GM12878 (cell line): ENCODE measurements at regions of chr12 and their contacts with region 1.

Region 1: DNA sequence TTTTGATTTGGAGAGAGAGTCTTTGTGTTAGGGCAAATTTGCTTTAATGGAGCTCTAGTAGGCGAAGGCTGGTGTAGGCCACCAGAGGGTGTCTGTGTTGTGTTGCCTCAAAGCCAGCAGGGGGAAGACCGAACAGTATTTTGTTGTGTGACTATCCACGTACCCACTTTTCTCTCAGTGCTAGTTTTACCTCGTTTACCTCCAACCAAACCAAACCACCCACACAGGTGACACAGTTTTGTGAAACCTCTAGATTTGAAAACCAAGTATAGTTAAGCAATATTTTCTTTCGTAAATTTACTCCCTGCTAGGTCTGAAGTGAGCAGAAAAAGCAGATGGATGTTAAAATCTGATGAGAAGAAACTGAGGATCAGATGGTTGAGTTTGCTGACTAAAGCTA is 36.3 kb upstream of the NPFF start:
- DNase-seq: peak; percentile 53
- ATAC-seq: peak; percentile 99
- H3K4me3 ChIP-seq: no peak overlapping the region
- H3K27ac ChIP-seq: peak overlapping the region; percentile 34; the same call in 1 of the 2 replicates
- H3K4me1 ChIP-seq: peaks cover 4% of the 10 kb centered on the region; the same call in 1 of the 2 replicates
- H3K27me3 ChIP-seq: no peaks in the 10 kb centered on the region
- CTCF ChIP-seq: peak; percentile 85 to 99 (median 88); a peak in 5 of 6 replicates
- EP300 ChIP-seq: no peak
- POLR2A ChIP-seq: no peak
- RAD21 ChIP-seq: peak; percentile 90

Region 2: DNA sequence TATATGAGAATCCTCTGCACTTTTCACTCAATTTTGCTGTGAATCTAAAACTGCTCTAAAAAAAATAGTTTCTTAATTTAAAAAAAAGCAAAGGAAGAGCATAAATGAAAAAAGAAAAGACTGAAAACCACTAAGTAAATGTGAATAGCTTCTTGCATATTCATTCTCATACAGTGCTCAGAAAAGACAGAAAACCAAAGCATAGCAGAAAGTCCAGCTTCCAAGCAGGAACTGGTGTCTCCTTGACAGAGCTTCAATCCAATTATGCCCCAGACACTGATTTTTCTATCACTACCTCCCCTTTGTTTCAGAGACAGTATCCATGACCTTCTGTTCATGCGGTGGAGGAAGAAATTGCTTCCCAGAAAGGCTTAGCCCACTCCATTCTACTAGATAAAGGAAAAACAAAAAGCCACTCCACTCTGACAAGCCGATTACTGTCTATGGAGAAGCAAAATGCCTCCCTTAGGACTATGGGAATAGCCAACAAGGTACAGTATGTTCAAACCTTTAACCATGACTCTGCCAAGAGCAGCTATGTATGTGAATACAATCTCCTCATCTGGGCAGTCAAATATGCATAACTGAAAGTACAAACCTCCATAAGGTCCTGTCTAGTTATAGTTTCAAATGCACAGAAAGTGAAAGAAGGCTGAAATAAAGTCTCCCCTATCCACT is 42.0 kb after region 1 on chr12:
- CTCF ChIA-PET with region 1: interaction called, 30 read pairs
- POLR2A ChIA-PET with region 1: no interaction called
- RAD21 ChIA-PET with region 1: interaction called, 9 read pairs
- SMC1A ChIA-PET with region 1: interaction called, 14 read pairs
- in situ Hi-C with region 1: no loop called
- intact Hi-C with region 1: no loop called
- DNase-seq: no peak
- ATAC-seq: peak; percentile 96
- H3K4me3 ChIP-seq: peak overlapping the region; percentile 40; the same call in 1 of the 2 replicates
- H3K27ac ChIP-seq: peak overlapping the region; percentile 54; the same call in 1 of the 2 replicates
- H3K4me1 ChIP-seq: peaks cover 13% of the 10 kb centered on the region
- H3K27me3 ChIP-seq: no peaks in the 10 kb centered on the region
- CTCF ChIP-seq: no peak
- EP300 ChIP-seq: no peak
- POLR2A ChIP-seq: no peak
- RAD21 ChIP-seq: no peak

Region 3: DNA sequence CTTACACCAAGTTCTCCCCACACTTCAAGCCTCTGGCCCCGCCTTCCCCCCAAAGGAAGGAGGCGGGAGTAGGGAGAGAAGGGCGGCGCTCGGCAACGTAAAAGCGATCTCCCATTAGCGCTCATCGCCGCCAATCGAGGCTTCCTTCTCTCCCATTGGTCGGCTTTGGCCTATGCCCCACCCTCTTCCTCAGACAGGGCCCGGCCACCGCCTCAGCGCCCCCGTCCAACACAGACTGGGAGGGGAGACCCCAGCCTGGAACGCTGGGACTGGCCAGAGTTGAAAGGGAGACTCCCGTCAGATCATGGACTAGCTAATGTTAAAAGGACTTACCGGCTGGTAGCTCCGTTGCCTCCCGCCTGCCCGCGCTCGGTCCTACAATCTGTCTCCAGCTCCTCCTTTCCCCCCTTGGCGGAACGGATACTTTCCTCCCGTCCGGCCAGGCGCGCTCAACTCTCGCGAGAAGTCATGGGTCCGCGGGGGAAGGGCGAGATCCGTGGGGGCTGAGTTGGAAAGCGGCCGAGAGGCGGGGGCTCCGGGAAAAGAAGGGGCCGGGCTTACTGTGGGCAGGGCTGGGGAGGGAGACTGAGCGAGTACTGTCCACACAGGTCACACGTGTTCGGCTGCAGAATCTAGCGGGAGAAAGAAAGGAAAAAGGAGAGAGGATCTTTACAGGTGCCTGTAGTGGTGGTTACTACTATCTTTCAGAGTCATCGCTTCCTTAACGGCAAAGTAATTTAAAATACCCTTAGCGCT is 82.6 kb after region 1 on chr12 and contains the start of gene ATF7:
- CTCF ChIA-PET with region 1: interaction called, 26 read pairs
- POLR2A ChIA-PET with region 1: interaction called, 5 read pairs
- RAD21 ChIA-PET with region 1: interaction called, 39 read pairs
- SMC1A ChIA-PET with region 1: interaction called, 29 read pairs
- in situ Hi-C with region 1: no loop called
- intact Hi-C with region 1: loop called (anchors 2 kb)
- DNase-seq: peak; percentile 96
- ATAC-seq: peak; percentile 98
- H3K4me3 ChIP-seq: peak within 1 kb of the TSS; percentile 94
- H3K27ac ChIP-seq: peak within 1 kb of the TSS; percentile 96
- H3K4me1 ChIP-seq: no peaks in the 10 kb centered on the region
- H3K27me3 ChIP-seq: no peaks in the 10 kb centered on the region
- CTCF ChIP-seq: no peak
- EP300 ChIP-seq: 0 out of 4 replicates have a peak, but pooled peaks of 1 of the 2 experiments have one; percentile 23
- POLR2A ChIP-seq: peak; percentile 80
- RAD21 ChIP-seq: no peak
- polyA plus RNA-seq, gene ATF7: 21.8 to 26.8 TPM

Region 4: DNA sequence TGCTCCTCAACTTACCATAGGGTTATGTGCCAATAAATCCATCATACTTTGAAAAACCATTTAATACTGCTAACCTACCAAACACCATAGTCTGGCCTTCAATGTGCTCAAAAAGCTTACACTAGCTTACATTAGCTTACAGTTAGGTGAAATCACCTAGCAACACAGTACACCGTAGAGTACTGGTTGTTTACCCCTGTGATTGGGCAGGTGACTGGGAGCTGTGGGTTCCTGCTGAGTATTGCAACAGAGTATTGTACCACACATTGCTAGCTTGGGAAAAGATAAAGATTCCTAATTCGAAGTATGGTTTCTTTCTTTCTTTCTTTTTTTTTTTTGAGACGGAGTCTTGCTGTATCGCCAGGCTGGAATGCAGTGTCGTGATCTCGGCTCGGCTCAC is 126.8 kb after region 1 on chr12:
- CTCF ChIA-PET with region 1: interaction called, 189 read pairs
- POLR2A ChIA-PET with region 1: interaction called, 35 read pairs
- RAD21 ChIA-PET with region 1: interaction called, 140 read pairs
- SMC1A ChIA-PET with region 1: interaction called, 112 read pairs
- in situ Hi-C with region 1: loop called (anchors 5 kb)
- intact Hi-C with region 1: no loop called
- DNase-seq: no peak
- ATAC-seq: peak; percentile 32; the same call in 1 of the 3 replicates
- H3K4me3 ChIP-seq: no peak overlapping the region
- H3K27ac ChIP-seq: no peak overlapping the region
- H3K4me1 ChIP-seq: no peaks in the 10 kb centered on the region
- H3K27me3 ChIP-seq: no peaks in the 10 kb centered on the region
- CTCF ChIP-seq: no peak
- EP300 ChIP-seq: no peak
- POLR2A ChIP-seq: no peak
- RAD21 ChIP-seq: no peak

Region 5: GRCh38 chr12:53746592-53747092 is 203.1 kb after region 1 on chr12:
- CTCF ChIA-PET with region 1: interaction called, 81 read pairs
- POLR2A ChIA-PET with region 1: interaction called, 4 read pairs
- RAD21 ChIA-PET with region 1: interaction called, 16 read pairs
- SMC1A ChIA-PET with region 1: interaction called, 46 read pairs
- in situ Hi-C with region 1: loop called (anchors 5 kb)
- intact Hi-C with region 1: loop called (anchors 2 kb)
- DNase-seq: peak; percentile 35
- ATAC-seq: peak; percentile 55
- H3K4me3 ChIP-seq: no peak overlapping the region
- H3K27ac ChIP-seq: no peak overlapping the region
- H3K4me1 ChIP-seq: peaks cover 9% of the 10 kb centered on the region
- H3K27me3 ChIP-seq: peaks cover 0 to 7% of the 10 kb centered on the region in 2 experiments; a peak in 1 of 4 replicates
- CTCF ChIP-seq: peak; percentile 100; a peak in 5 of 6 replicates
- EP300 ChIP-seq: no peak
- POLR2A ChIP-seq: no peak
- RAD21 ChIP-seq: peak; percentile 87